ENCODE measurements at regions of chr1 and their contacts with region 1.

Region 1: DNA sequence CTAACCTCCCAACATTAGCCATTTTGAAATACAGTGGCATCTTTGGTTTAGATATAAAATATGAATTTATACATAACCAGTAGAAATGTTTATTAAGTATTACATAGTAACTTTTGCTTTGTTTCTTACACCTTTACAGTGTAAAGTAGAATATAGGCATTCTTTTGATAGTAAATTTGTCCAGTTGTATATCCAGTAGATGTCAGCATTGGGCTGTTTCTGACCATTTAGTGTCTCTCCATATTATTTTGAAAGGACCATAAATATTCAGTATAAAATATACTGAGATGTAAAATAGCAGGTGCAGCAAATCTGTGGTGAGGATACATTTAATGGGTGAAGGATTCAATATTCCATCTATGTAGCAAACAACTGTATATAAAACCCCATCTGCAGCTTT is 115.8 kb upstream of the ZRANB2 start:
- DNase-seq: no peak
- ATAC-seq: no peak
- H3K4me3 ChIP-seq: no peak overlapping the region
- H3K27ac ChIP-seq: no peak overlapping the region
- H3K4me1 ChIP-seq: peaks cover 0 to 7% (median 0%) of the 10 kb centered on the region in 12 donors
- H3K27me3 ChIP-seq: no peaks in the 10 kb centered on the region
- CTCF ChIP-seq: peak in 10 of 12 donors; percentile 4 to 54 (median 42)
- POLR2A ChIP-seq: no peak

Region 2: DNA sequence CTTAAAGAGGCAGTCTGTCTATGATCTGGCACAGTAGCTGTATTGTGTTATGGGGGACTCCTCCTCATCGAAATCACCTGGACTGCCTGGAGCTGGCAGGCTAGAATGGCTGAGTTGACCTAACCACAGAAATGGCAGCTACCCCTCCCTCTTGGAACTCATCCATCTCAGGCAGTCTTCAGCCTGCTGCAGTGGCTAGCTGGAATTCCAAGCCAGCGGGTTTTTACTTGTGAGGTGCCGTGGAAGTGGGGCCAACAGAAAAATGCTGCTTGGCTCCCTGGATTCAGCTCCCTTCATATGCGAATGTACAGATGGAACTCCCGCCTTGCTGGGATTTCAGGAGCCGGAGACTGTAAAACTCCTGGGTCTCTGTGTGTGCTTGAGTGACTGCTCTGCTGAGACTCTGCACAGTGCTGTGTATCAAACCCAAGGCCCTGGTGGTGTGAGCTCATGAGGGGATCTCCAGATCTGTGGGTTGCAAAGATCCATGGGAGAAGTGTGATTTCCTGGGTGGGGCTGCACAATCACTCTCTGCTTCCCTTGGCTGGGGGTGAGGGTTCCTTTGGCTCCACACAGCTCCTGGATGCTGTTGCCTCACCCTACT is 468.7 kb before region 1 on chr1:
- intact Hi-C with region 1: no loop called
- DNase-seq: peak in 1 of 5 donors; percentile 30
- ATAC-seq: no peak
- H3K4me3 ChIP-seq: no peak overlapping the region
- H3K27ac ChIP-seq: no peak overlapping the region
- H3K4me1 ChIP-seq: no peaks in the 10 kb centered on the region
- H3K27me3 ChIP-seq: no peaks in the 10 kb centered on the region
- CTCF ChIP-seq: no peak
- POLR2A ChIP-seq: no peak

Region 3: GRCh38 chr1:71222668-71223067 is 26.0 kb after region 1 on chr1:
- intact Hi-C with region 1: no loop called
- DNase-seq: no peak
- ATAC-seq: no peak
- H3K4me3 ChIP-seq: no peak overlapping the region
- H3K27ac ChIP-seq: no peak overlapping the region
- H3K4me1 ChIP-seq: no peaks in the 10 kb centered on the region
- H3K27me3 ChIP-seq: no peaks in the 10 kb centered on the region
- CTCF ChIP-seq: no peak
- POLR2A ChIP-seq: no peak

Region 4: GRCh38 chr1:71521655-71522264 is 325.1 kb after region 1 on chr1:
- intact Hi-C with region 1: loop called (anchors 5 to 10 kb)
- DNase-seq: peak in 3 of 5 donors; percentile 11 to 40 (median 20)
- ATAC-seq: peak in 2 of 4 donors; percentile 52 to 67
- H3K4me3 ChIP-seq: no peak overlapping the region
- H3K27ac ChIP-seq: no peak overlapping the region
- H3K4me1 ChIP-seq: no peaks in the 10 kb centered on the region
- H3K27me3 ChIP-seq: no peaks in the 10 kb centered on the region
- CTCF ChIP-seq: peak in 11 of 12 donors; percentile 22 to 72 (median 57)
- POLR2A ChIP-seq: no peak

Region 5: GRCh38 chr1:71526824-71527223 is 330.1 kb after region 1 on chr1:
- intact Hi-C with region 1: loop called (anchors 5 to 10 kb)
- DNase-seq: no peak
- ATAC-seq: no peak
- H3K4me3 ChIP-seq: no peak overlapping the region
- H3K27ac ChIP-seq: no peak overlapping the region
- H3K4me1 ChIP-seq: no peaks in the 10 kb centered on the region
- H3K27me3 ChIP-seq: no peaks in the 10 kb centered on the region
- CTCF ChIP-seq: no peak
- POLR2A ChIP-seq: no peak

Measured in heart left ventricle (tissue), 16 donors.